ENCODE measurements at regions of chr1 and their contacts with region 1.

Region 1: DNA sequence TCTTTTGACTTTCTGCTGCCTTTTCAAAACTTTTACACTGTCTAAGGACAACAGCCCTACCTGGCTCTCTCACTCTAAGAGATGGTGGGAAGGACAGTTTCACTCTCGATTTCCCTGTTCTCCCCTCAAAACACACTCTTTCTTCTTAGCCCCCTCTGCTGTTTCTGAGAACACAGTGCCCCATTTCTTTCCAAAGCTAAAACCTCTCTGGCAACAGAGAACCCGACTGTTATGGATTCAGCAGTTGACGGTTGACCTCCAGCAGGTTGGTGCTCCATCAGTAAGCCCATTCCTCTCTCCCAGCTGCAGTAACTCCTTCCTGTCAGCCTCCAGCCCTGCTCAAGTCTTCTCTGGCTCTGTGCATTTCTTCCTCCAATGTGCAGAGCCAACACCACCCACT is 88.2 kb upstream of the ABCD3 start:
- DNase-seq: no peak
- H3K4me3 ChIP-seq: no peak overlapping the region
- H3K27ac ChIP-seq: no peak overlapping the region
- H3K4me1 ChIP-seq: peaks cover 45% of the 10 kb centered on the region
- H3K27me3 ChIP-seq: no peaks in the 10 kb centered on the region
- CTCF ChIP-seq: peak; percentile 28 to 44

Region 2: DNA sequence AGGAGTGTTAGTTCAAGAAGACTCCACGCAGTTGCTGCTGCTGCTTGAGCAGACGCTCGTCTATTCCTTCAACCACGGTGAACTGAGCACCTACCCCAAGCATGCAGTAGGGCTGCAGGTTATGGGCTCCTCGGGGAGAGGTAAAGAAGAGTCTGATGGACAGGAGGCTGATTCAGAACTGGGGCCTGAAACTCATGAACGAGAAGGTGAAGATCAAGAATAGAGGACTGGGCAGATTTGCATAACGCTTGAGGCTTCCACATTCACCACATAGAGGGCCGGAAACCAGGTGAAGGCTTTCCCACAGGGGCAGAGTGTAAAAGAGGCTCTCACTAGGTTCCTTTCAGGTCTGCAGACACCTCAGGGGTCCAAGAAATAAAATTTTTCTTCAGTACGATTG is 218.1 kb before region 1 on chr1:
- CTCF ChIA-PET with region 1: no interaction called
- dilution Hi-C with region 1: no loop called
- in situ Hi-C with region 1: no loop called
- intact Hi-C with region 1: no loop called
- DNase-seq: no peak
- H3K4me3 ChIP-seq: no peak overlapping the region
- H3K27ac ChIP-seq: no peak overlapping the region
- H3K4me1 ChIP-seq: peaks cover 5% of the 10 kb centered on the region
- H3K27me3 ChIP-seq: no peaks in the 10 kb centered on the region
- CTCF ChIP-seq: no peak

Region 3: GRCh38 chr1:94299627-94300552 is 30.1 kb before region 1 on chr1:
- CTCF ChIA-PET with region 1: no interaction called
- dilution Hi-C with region 1: no loop called
- in situ Hi-C with region 1: no loop called
- intact Hi-C with region 1: loop called (anchors 2 kb)
- DNase-seq: peak; percentile 96
- H3K4me3 ChIP-seq: no peak overlapping the region
- H3K27ac ChIP-seq: peak overlapping the region; percentile 70
- H3K4me1 ChIP-seq: peaks cover 44% of the 10 kb centered on the region
- H3K27me3 ChIP-seq: no peaks in the 10 kb centered on the region
- CTCF ChIP-seq: no peak

Region 4: DNA sequence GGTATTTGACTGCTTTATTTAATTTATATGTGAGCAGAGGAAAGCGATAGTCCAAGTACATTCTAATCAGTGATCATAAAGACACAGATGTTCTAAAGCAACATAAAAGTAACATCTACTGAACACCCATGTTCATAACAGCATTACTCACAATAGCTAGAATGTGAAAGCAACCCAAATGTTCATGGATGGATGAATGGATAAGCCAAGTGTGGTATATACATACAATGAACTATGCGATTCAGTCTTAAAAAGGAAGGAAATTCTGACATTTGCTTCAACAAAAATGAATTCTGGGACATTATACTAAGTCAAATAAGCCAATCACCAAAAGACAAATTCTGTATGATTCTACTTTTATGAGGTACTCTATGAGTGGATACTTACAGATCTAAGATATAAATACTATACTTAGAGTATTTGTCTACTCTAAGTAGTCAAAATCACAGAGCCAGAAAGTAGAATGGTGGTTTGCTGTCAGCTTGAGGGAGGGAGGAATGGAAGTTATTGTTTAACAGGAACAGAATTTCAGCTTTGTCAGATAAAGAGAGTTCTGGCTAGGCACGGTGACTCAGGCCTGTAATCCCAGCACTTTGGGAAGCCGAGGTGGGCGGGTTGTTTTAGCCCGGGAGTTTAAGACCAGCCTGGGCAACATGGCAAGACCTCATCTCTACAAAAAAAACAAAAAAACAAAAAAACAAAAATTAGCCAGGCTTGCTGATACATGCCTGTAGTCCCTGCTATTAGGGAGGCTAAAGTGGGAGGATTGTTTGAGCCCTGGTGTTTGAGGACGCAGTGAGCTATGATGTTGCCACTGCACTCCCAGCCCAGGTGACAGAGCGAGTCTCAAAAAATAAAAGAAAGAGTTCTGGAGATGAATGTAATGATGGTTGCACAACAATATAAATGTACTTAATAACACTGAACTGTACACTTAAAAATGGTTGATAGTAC is 12.9 kb before region 1 on chr1:
- CTCF ChIA-PET with region 1: no interaction called
- dilution Hi-C with region 1: no loop called
- in situ Hi-C with region 1: no loop called
- intact Hi-C with region 1: no loop called
- DNase-seq: peak; percentile 52
- H3K4me3 ChIP-seq: no peak overlapping the region
- H3K27ac ChIP-seq: no peak overlapping the region
- H3K4me1 ChIP-seq: peaks cover 13% of the 10 kb centered on the region
- H3K27me3 ChIP-seq: no peaks in the 10 kb centered on the region
- CTCF ChIP-seq: no peak

Measured in mammary epithelial cell (primary cell).